ENCODE measurements at regions of chr9 and their contacts with region 1.

Region 1: GRCh38 chr9:72013292-72013760 is 47.1 kb downstream of the C9orf57 start:
- DNase-seq: no peak
- H3K4me3 Mint-ChIP-seq: no peak overlapping the region
- H3K27ac Mint-ChIP-seq: no peak overlapping the region
- H3K4me1 Mint-ChIP-seq: peaks cover 10% of the 10 kb centered on the region
- H3K27me3 Mint-ChIP-seq: no peaks in the 10 kb centered on the region

Region 2: DNA sequence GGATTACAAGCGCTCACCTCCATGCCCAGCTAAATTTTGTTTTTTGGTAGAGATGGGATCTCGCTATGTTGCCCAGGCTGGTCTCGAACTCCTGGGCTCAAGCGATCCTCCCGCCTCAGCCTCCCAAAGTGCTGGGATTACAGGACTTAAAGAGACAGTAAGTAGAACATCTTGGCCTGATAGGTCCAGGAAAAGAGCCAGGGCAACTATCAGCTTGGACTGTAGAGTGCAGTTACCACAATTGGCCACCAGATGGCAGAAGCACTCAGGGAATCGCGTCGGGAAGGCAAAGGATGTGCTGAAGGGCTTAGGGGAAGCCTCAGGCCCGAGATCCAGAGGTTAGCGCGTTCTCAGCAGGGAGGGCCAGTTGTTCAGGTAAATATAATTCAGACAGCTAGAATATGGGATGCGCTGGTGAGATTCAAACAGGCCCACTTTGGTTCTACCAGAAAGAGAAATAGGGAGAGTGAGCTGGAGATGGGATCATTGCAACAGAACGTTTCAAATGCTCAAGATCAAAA is 25.6 kb after region 1 on chr9:
- CTCF ChIA-PET with region 1: interaction called, 11 read pairs
- POLR2A ChIA-PET with region 1: no interaction called
- DNase-seq: peak; percentile 65
- H3K4me3 Mint-ChIP-seq: no peak overlapping the region
- H3K27ac Mint-ChIP-seq: no peak overlapping the region
- H3K4me1 Mint-ChIP-seq: peaks cover 2% of the 10 kb centered on the region
- H3K27me3 Mint-ChIP-seq: peaks cover 10% of the 10 kb centered on the region

Measured in activated CD4-positive, alpha-beta T cell treated with anti-CD3 and anti-CD28 coated beads, Interleukin-2, amount 10 ng/mL, durations not matched to agents 7 days and 5 days (primary cell).